HEK293T (cell line): ENCODE measurements at regions of chr14 and their contacts with region 1.

Region 1: GRCh38 chr14:67532998-67533753 is at the start of gene PLEKHH1:
- DNase-seq: peak; percentile 81

Region 2: GRCh38 chr14:67426983-67427606 is 106.1 kb before region 1 on chr14:
- CTCF ChIA-PET with region 1: interaction called, 10 read pairs
- POLR2A ChIA-PET with region 1: interaction called, 7 read pairs
- DNase-seq: peak; percentile 83

Region 3: DNA sequence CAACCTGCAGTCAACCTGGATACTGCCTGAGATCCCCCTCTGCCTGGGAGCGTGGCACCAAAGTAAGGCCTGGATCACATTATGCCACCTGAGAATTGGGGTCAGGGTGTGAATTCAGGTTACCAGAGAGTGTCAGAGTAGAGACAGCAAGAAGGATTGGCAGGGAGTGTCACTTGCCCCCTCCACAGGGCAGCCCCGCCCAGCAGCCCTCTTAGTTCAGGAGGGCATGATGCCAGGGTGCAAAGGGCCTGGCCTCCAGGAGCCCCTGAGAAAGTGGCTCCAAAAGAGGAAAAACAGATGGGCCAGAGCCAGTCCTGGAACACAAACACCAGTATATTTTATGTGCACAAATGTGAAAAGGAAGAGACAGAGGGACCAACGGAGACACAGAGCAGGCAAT is 63.2 kb before region 1 on chr14:
- CTCF ChIA-PET with region 1: no interaction called
- POLR2A ChIA-PET with region 1: no interaction called
- DNase-seq: no peak

Region 4: GRCh38 chr14:67514650-67515385 is 18.4 kb before region 1 on chr14:
- CTCF ChIA-PET with region 1: interaction called, 4 read pairs
- POLR2A ChIA-PET with region 1: interaction called, 22 read pairs
- DNase-seq: peak; percentile 42

Region 5: GRCh38 chr14:67557126-67557525 is 23.9 kb after region 1 on chr14:
- CTCF ChIA-PET with region 1: no interaction called
- POLR2A ChIA-PET with region 1: interaction called, 12 read pairs
- DNase-seq: no peak

Region 6: GRCh38 chr14:67571272-67571850 is 38.2 kb after region 1 on chr14:
- CTCF ChIA-PET with region 1: interaction called, 39 read pairs
- POLR2A ChIA-PET with region 1: interaction called, 12 read pairs
- DNase-seq: peak; percentile 72

Region 7: GRCh38 chr14:67619446-67620216 is 86.5 kb after region 1 on chr14 and contains the start of gene ARG2:
- CTCF ChIA-PET with region 1: no interaction called
- POLR2A ChIA-PET with region 1: no interaction called
- DNase-seq: peak; percentile 96

Region 8: GRCh38 chr14:67695394-67695949 is 162.3 kb after region 1 on chr14 and contains the start of gene RDH11:
- CTCF ChIA-PET with region 1: no interaction called
- POLR2A ChIA-PET with region 1: interaction called, 11 read pairs
- DNase-seq: peak; percentile 90